ENCODE measurements at regions of chr21 and their contacts with region 1.

Region 1: GRCh38 chr21:44892536-44893277 is 19.2 kb upstream of the PTTG1IP start:
- DNase-seq: peak; percentile 62 to 74
- ATAC-seq: peak; percentile 39 to 78 (median 68)
- H3K4me3 ChIP-seq: no peak overlapping the region
- H3K27ac ChIP-seq: peak overlapping the region in 1 of 10 donors; percentile 34
- H3K4me1 ChIP-seq: peaks cover 0 to 10% (median 0%) of the 10 kb centered on the region in 9 donors
- H3K27me3 ChIP-seq: peaks cover 0 to 12% (median 3%) of the 10 kb centered on the region in 7 donors
- CTCF ChIP-seq: peak; percentile 66 to 90 (median 84)

Region 2: DNA sequence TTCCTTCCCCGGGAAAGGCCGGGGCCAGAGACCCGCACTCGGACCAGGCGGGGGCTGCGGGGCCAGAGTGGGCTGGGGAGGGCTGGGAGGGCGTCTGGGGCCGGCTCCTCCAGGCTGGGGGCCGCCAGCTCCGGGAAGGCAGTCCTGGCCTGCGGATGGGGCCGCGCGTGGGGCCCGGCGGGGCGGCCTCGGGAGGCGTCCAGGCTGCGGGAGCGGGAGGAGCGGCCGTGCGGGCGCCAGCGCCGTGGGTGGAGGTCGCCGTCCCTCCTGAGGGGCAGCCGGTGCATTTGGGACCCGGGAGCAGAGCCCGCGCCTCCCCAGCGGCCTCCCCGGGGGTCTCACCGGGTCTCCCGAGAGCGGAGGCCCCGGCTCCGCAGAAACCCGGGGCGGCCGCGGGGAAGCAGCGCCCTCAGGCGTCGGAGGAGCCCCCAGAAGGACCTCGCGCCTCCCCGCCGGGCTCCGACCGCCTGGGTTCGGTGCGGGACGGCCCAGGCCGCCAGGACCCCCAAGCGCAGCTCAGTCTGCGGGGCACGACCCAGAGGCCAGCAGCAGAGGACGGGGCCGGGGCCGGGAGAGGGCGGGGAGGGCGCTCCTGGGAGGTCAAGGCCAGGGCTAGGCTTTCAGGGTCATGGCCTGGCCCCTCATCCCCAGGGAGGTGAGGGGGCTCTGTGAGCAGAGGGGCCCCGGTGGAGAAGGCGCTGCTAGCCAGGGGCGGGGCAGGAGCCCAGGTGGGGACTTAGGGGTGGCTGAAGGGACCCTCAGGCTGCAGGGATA is 39.9 kb after region 1 on chr21:
- intact Hi-C with region 1: loop called in 9 of 10 experiments (anchors 2 to 5 kb)
- DNase-seq: peak in 1 of 2 donors; percentile 65
- ATAC-seq: peak; percentile 34 to 72 (median 54)
- H3K4me3 ChIP-seq: peak overlapping the region; percentile 23 to 60 (median 46)
- H3K27ac ChIP-seq: peak overlapping the region in 3 of 10 donors; percentile 15 to 96 (median 26)
- H3K4me1 ChIP-seq: peaks cover 12 to 55% (median 25%) of the 10 kb centered on the region in 9 donors
- H3K27me3 ChIP-seq: peaks cover 13 to 71% (median 40%) of the 10 kb centered on the region in 7 donors
- CTCF ChIP-seq: peak; percentile 36 to 76 (median 62)

Region 3: GRCh38 chr21:44939532-44940115 is 46.9 kb after region 1 on chr21 and contains the start of gene SLX9:
- intact Hi-C with region 1: loop called in 8 of 10 experiments (anchors 5 kb)
- DNase-seq: peak; percentile 66 to 83
- ATAC-seq: peak; percentile 82 to 95 (median 88)
- H3K4me3 ChIP-seq: peak within 1 kb of the TSS; percentile 75 to 97 (median 87)
- H3K27ac ChIP-seq: peak within 1 kb of the TSS in 9 of 10 donors; percentile 70 to 88 (median 80)
- H3K4me1 ChIP-seq: peaks cover 3 to 41% (median 30%) of the 10 kb centered on the region in 9 donors
- H3K27me3 ChIP-seq: peaks cover 0 to 6% (median 0%) of the 10 kb centered on the region in 7 donors
- CTCF ChIP-seq: peak in 1 of 9 donors; percentile 4
- total RNA-seq, gene SLX9: 42.4 to 67.2 (median 52.6) TPM

Measured in heart right ventricle (tissue), 16 donors.